BJ (cell line): ENCODE measurements at regions of chr5 and their contacts with region 1.

Region 1: DNA sequence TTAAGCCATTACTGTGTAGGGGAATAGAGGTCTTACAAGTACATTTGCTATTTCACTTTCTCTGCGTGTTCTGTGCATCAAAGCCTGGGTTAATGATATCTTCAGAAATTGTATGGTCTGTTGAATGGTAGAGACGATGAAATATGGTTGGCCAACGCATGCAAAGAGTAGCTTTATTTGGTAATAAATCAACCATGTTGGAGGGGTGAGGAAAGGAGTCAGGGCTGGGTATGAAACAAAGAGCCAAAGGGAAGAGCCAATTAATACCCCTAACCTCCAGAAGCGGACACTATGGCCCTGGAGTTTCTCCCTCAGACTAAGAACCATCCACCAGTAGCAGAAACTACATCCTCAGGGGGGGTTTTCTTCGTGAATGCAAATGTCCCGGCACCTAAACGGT is 1974.0 kb upstream of the WWC1 start:
- DNase-seq: no peak
- H3K4me3 ChIP-seq: no peak overlapping the region
- H3K27me3 ChIP-seq: no peaks in the 10 kb centered on the region
- CTCF ChIP-seq: no peak

Region 2: DNA sequence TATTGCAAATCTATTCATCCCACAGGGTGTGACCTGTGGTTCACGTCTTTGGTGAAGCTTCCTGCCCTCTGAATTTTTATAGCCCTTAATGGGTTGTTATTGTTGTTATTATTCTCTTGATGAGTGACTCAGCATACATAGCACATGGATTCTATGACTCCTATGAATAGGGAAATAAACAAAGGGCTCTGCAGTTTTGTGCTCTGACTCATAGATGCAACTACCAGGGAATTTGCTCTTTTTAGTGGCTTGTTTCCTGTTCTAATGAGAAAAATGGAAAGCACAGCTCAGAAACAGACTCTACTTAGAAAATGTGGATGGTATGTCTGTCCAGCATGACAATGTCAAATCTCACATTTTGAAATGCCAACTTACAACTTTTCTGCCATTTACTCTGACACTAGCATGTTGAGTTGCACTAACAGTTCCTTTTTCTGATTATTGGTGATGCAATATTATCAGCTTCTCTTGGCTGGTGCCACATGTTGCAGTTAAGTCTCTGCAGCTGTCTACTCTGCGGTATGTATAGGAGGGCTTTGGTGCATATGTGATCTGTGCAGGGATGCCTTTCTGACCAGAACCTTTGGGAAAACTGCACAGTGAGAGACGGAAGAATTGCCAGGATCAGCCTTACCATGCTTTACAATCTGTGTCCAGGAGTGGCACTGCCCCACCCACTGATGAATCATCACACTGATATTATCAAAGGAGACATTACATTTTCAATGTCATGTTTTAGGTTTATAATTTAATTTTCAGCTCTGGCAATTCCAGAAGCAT is 977.7 kb after region 1 on chr5:
- CTCF ChIA-PET with region 1: no interaction called
- POLR2A ChIA-PET with region 1: interaction called, 27 read pairs
- DNase-seq: peak; percentile 97
- H3K4me3 ChIP-seq: no peak overlapping the region
- H3K27me3 ChIP-seq: no peaks in the 10 kb centered on the region
- CTCF ChIP-seq: no peak